ENCODE measurements at regions of chr17 and their contacts with region 1.

Region 1: GRCh38 chr17:35808962-35809854 is at the start of gene TAF15:
- DNase-seq: peak; percentile 97
- H3K4me3 Mint-ChIP-seq: peak within 1 kb of the TSS; percentile 81
- H3K27ac Mint-ChIP-seq: peak within 1 kb of the TSS; percentile 99
- H3K4me1 Mint-ChIP-seq: peaks cover 46% of the 10 kb centered on the region
- H3K27me3 Mint-ChIP-seq: no peaks in the 10 kb centered on the region
- total RNA-seq, gene TAF15: 269 to 271 TPM

Region 2: GRCh38 chr17:35373534-35373983 is 435.6 kb before region 1 on chr17 and contains the start of gene SLFN11:
- CTCF ChIA-PET with region 1: no interaction called
- POLR2A ChIA-PET with region 1: no interaction called
- intact Hi-C with region 1: loop called (anchors 2 kb)
- DNase-seq: peak; percentile 94
- H3K4me3 Mint-ChIP-seq: peak within 1 kb of the TSS; percentile 96
- H3K27ac Mint-ChIP-seq: peak within 1 kb of the TSS; percentile 97
- H3K4me1 Mint-ChIP-seq: peaks cover 53% of the 10 kb centered on the region
- H3K27me3 Mint-ChIP-seq: no peaks in the 10 kb centered on the region
- total RNA-seq, gene SLFN11: 64.8 to 68.8 TPM

Region 3: GRCh38 chr17:35747540-35748017 is 61.6 kb before region 1 on chr17:
- CTCF ChIA-PET with region 1: interaction called, 12 read pairs
- POLR2A ChIA-PET with region 1: no interaction called
- intact Hi-C with region 1: loop called (anchors 10 kb)
- DNase-seq: peak; percentile 86
- H3K4me3 Mint-ChIP-seq: no peak overlapping the region
- H3K27ac Mint-ChIP-seq: no peak overlapping the region
- H3K4me1 Mint-ChIP-seq: peaks cover 5% of the 10 kb centered on the region
- H3K27me3 Mint-ChIP-seq: peaks cover 38% of the 10 kb centered on the region

Region 4: GRCh38 chr17:35794988-35795824 is 14.0 kb before region 1 on chr17 and contains the start of gene MMP28:
- CTCF ChIA-PET with region 1: interaction called, 11 read pairs
- POLR2A ChIA-PET with region 1: interaction called, 11 read pairs
- intact Hi-C with region 1: no loop called
- DNase-seq: peak; percentile 53
- H3K4me3 Mint-ChIP-seq: peak within 1 kb of the TSS; percentile 60
- H3K27ac Mint-ChIP-seq: no peak within 1 kb of the TSS
- H3K4me1 Mint-ChIP-seq: peaks cover 14% of the 10 kb centered on the region
- H3K27me3 Mint-ChIP-seq: peaks cover 45% of the 10 kb centered on the region
- total RNA-seq, gene MMP28: not detected

Region 5: DNA sequence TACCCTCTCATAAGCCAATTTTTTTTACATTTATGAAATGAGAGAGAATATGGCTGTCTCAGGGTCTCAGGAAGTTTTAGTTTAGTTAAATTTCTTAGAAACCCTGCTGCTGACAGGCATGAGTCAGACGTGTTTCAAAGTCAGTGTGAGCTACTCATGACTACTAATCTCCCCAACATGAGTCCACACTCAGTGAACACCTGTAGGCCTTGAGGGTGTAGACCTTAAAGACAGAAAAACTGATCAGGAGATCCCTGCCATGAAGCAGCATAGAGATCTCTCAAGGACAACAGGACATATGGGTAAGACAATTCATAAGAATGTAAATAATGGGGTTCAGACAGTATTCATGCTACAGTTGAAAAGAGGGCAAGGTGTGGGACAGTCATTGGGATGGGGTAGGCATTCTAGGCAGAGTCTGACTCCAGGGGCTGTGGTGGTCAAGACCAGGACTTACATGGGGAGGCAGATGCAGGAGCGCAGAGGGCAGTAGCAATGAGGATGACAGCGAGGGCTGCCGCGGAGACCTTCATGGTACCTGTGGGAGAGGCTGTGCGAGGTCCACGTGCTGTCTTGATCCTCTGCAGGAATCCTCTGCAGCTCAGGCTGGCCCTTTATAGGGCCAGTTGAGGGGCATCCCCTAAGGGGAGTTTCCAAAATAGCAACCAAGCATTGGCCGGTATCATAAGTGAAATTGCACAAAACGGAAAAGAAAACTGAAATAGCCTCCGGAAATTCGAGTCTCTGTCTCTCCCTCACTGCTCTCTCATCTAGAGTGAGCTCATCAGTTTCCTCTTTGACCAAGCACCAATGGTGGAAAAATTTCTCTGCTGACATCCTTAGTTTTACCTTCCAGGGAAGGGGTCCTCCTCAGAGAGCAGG is 70.8 kb after region 1 on chr17 and contains the start of gene CCL5:
- CTCF ChIA-PET with region 1: interaction called, 4 read pairs
- POLR2A ChIA-PET with region 1: interaction called, 12 read pairs
- intact Hi-C with region 1: no loop called
- DNase-seq: peak; percentile 75
- H3K4me3 Mint-ChIP-seq: peak within 1 kb of the TSS; percentile 69
- H3K27ac Mint-ChIP-seq: peak within 1 kb of the TSS; percentile 97
- H3K4me1 Mint-ChIP-seq: peaks cover 47% of the 10 kb centered on the region
- H3K27me3 Mint-ChIP-seq: no peaks in the 10 kb centered on the region
- total RNA-seq, gene CCL5: 120 to 133 TPM